Common myeloid progenitor, CD34-positive (primary cell): ENCODE measurements at regions of chr2 and their contacts with region 1.

Region 1: GRCh38 chr2:178320011-178320585 is 125.8 kb downstream of the OSBPL6 start:
- DNase-seq: peak; percentile 31 to 82 (median 66)
- H3K4me3 ChIP-seq: peak overlapping the region in 1 of 7 experiments; percentile 51
- H3K27ac ChIP-seq: no peak overlapping the region
- H3K4me1 ChIP-seq: peaks cover 3 to 32% (median 9%) of the 10 kb centered on the region in 4 experiments
- H3K27me3 ChIP-seq: no peaks in the 10 kb centered on the region

Region 2: DNA sequence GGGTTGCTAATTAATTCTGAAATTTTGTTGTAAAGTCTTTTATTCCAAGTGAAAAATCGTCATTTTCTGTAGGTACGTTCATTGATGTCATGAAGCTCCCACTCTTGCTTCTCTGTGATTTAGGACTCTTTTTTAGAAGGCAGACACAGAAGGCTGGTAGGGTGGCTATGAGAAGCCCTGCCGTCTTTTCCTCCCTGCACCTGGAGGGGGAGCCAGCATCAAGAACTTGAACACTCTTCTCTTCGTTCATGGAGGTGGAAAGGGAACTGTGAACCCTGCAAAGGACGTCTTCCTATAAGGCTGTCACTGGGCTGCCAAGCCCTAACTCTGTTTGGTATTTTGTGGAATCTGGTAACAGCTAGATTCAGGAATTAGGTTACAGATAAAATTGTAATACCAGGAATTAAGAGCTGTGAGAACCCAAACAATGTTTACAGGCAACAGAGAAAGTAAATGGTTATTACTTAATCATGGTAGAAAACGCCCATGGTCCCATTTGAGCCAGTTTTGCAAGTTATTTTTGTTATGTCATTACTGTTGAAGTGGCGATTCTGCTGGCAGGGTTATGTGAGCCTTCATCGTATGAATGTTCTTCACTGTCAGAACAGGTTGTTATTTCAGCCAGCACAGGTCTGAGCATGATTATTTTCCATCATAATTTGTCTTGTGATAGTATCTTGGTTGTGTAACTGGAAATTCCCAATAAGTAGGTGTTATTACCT is 13.6 kb before region 1 on chr2:
- CTCF ChIA-PET with region 1: interaction called, 10 read pairs
- POLR2A ChIA-PET with region 1: no interaction called
- DNase-seq: peak; percentile 63 to 76 (median 73)
- H3K4me3 ChIP-seq: no peak overlapping the region
- H3K27ac ChIP-seq: no peak overlapping the region
- H3K4me1 ChIP-seq: no peaks in the 10 kb centered on the region
- H3K27me3 ChIP-seq: no peaks in the 10 kb centered on the region